K562 (cell line): ENCODE measurements at regions of chr12 and their contacts with region 1.

Region 1: DNA sequence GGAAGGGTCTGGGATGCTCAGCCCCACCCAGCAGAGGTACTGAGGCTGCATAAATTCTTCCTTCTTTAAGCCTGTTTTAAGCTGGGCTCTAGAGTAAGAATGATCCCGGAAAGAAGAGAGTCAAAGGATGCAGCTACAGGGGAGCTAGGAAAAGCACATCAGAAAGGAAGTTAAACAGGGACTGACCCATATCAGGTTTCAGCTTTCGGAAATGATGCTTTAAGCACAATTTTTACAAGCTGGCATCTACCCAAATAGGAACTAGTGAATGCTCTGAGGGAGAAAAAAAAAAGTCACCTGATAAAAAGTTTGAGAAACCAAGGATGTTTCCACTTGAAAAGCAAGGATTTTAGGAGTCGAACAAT is 22.0 kb downstream of the TSPAN8 start:
- DNase-seq: no peak
- ATAC-seq: no peak
- H3K4me3 ChIP-seq: no peak overlapping the region
- H3K27ac ChIP-seq: no peak overlapping the region
- H3K4me1 ChIP-seq: no peaks in the 10 kb centered on the region
- H3K27me3 ChIP-seq: 0 out of 5 replicates have a peak, but pooled peaks cover 0 to 2% of the 10 kb centered on the region in 2 experiments
- CTCF ChIP-seq: no peak
- EP300 ChIP-seq: no peak
- POLR2A ChIP-seq: no peak
- RAD21 ChIP-seq: no peak

Region 2: GRCh38 chr12:70839540-70839939 is 296.3 kb before region 1 on chr12:
- CTCF ChIA-PET with region 1: no interaction called
- POLR2A ChIA-PET with region 1: no interaction called
- in situ Hi-C with region 1: no loop called
- intact Hi-C with region 1: no loop called
- DNase-seq: no peak
- ATAC-seq: 0 out of 3 replicates have a peak, but pooled peaks have one; percentile 42
- H3K4me3 ChIP-seq: no peak overlapping the region
- H3K27ac ChIP-seq: no peak overlapping the region
- H3K4me1 ChIP-seq: no peaks in the 10 kb centered on the region
- H3K27me3 ChIP-seq: no peaks in the 10 kb centered on the region
- CTCF ChIP-seq: peak in 1 of 3 experiments; percentile 34; a peak in 2 of 6 replicates
- EP300 ChIP-seq: no peak
- POLR2A ChIP-seq: no peak
- RAD21 ChIP-seq: 0 out of 4 replicates have a peak, but pooled peaks of 1 of the 2 experiments have one; percentile 9

Region 3: DNA sequence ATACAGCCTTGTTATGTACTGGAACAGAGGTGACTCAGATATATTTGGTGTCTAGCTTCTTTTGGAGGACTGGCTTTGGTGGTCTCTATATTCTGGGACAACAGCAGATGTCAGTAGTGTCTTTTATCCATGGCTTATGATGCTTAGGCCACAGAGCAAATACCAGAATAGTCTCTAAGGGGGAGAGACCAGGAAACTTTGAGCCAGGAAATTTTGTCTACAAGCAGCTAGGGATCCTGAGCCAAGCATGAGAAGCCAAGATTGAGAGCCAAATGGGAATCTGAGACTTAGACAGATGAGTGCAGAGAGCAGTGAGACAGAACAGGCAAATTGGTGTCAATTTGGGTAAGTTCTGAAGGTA is 186.8 kb before region 1 on chr12:
- CTCF ChIA-PET with region 1: no interaction called
- POLR2A ChIA-PET with region 1: no interaction called
- in situ Hi-C with region 1: no loop called
- intact Hi-C with region 1: no loop called
- DNase-seq: no peak
- ATAC-seq: no peak
- H3K4me3 ChIP-seq: no peak overlapping the region
- H3K27ac ChIP-seq: no peak overlapping the region
- H3K4me1 ChIP-seq: no peaks in the 10 kb centered on the region
- H3K27me3 ChIP-seq: no peaks in the 10 kb centered on the region
- CTCF ChIP-seq: no peak; a peak in 1 of 6 replicates
- EP300 ChIP-seq: no peak
- POLR2A ChIP-seq: no peak
- RAD21 ChIP-seq: peak in 1 of 2 experiments; percentile 26; a peak in 2 of 4 replicates

Region 4: DNA sequence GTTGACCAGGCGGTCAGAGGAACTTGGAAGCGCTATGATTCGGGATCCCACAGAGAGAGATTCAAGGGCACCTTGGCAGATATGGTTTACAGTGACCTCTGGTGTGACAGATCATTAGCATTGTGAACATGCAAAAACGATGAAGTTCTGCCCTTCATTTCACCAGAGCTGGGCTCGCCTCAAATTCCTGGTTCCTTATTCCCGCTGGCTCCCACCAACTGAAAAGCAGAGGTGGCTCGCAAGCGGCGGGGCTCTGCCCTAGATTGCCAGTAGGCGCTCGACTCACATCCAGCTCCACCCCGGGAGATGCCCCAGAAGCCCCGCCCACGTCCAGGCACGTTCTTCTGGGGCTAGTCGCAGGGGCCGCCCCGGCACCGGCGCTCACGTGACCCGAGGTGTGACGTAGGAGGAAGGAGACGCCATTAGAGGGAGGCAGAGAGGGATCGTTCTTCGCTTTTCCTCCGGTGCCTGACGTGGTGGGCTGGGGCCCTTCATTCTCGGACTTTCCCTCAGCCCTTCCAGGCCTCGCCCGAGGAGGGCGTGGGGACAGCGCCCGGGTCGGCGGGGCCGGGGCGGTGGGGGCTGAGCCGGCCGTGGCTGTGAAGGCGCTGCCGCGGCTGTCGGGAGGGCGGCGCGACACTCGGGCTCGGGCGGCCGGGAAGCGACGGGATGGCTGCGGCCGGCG is 618.8 kb after region 1 on chr12 and contains the start of gene RAB21:
- CTCF ChIA-PET with region 1: no interaction called
- POLR2A ChIA-PET with region 1: no interaction called
- in situ Hi-C with region 1: no loop called
- intact Hi-C with region 1: loop called (anchors 10 kb)
- DNase-seq: peak; percentile 96 to 98 (median 96)
- ATAC-seq: peak; percentile 92
- H3K4me3 ChIP-seq: peak within 1 kb of the TSS; percentile 67
- H3K27ac ChIP-seq: peak within 1 kb of the TSS; percentile 93
- H3K4me1 ChIP-seq: peaks cover 12 to 28% of the 10 kb centered on the region in 2 experiments; a peak in 4 of 5 replicates
- H3K27me3 ChIP-seq: no peaks in the 10 kb centered on the region
- CTCF ChIP-seq: peak in 2 of 3 experiments; percentile 1 to 14; a peak in 2 of 6 replicates
- EP300 ChIP-seq: no peak
- POLR2A ChIP-seq: peak; percentile 84
- RAD21 ChIP-seq: no peak
- polyA plus RNA-seq, gene RAB21: 5.3 to 8.2 TPM